Gastrocnemius medialis (tissue), 4 donors: ENCODE measurements at regions of chr12 and their contacts with region 1.

Region 1: DNA sequence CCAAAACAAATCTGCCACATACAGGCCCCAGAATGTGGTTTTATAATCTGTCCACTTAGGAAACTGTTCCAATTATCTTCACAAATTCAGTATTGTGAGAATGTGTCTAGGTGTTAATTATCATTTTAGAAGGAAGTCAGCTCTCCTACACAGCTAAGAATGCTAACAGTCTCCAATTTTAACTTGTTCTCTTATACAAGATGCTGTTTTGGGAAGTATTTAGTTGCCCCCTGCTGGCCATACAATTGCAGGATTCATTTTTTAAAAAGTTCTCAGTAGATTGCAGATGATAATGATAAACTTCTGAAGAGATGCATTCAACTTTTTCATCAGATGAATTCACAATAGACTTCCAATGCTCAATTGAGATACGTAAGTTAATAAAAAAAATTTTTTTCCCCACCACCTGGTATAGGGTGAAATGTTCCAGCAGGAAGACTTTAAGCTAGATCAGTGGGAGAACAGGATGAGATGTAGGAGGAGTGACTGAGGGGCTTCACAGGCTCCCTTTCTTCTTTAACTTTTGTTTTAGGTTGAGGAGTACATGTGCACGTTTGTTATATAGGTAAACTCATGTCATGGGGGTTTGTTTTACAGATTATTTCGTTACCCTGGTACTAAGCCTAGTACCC is 27.3 kb upstream of the OSBPL8 start:
- DNase-seq: peak in 1 of 2 donors; percentile 30
- ATAC-seq: no peak
- H3K4me3 ChIP-seq: no peak overlapping the region
- H3K27ac ChIP-seq: peak overlapping the region; percentile 88 to 97 (median 90)
- H3K4me1 ChIP-seq: peaks cover 15 to 16% of the 10 kb centered on the region in 2 donors
- H3K27me3 ChIP-seq: no peaks in the 10 kb centered on the region
- CTCF ChIP-seq: peak; percentile 55 to 76 (median 64)
- POLR2A ChIP-seq: no peak

Region 2: GRCh38 chr12:76384560-76384959 is 202.3 kb before region 1 on chr12:
- in situ Hi-C with region 1: no loop called
- intact Hi-C with region 1: loop called (anchors 10 kb)
- DNase-seq: peak in 1 of 2 donors; percentile 22
- ATAC-seq: peak in 1 of 2 donors; percentile 53
- H3K4me3 ChIP-seq: no peak overlapping the region
- H3K27ac ChIP-seq: peak overlapping the region in 2 of 4 donors; percentile 45 to 57
- H3K4me1 ChIP-seq: peaks cover 19% of the 10 kb centered on the region in 2 donors
- H3K27me3 ChIP-seq: no peaks in the 10 kb centered on the region
- CTCF ChIP-seq: no peak
- POLR2A ChIP-seq: no peak

Region 3: DNA sequence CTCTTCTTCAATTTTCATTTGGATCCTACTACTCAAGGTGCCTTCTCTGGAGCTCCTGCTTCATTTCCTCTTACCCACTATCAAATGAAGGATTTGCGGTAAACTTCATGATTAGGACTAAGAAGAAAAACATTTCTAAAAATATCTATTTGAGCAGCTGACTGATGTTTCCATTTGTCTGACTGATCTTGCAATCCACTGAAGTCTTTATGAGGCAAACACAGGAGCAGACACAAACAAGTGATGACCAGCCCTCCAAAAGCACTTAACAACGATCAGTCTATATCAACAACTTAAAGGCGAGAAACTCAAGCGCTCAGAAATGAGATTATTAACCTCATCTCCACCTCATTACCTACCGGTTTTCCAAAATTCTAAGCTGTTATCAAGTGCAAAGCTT is 53.5 kb before region 1 on chr12:
- in situ Hi-C with region 1: no loop called
- intact Hi-C with region 1: loop called (anchors 2 kb)
- DNase-seq: no peak
- ATAC-seq: peak; percentile 32 to 68
- H3K4me3 ChIP-seq: peak overlapping the region in 1 of 4 donors; percentile 32
- H3K27ac ChIP-seq: peak overlapping the region; percentile 45 to 67 (median 53)
- H3K4me1 ChIP-seq: peaks cover 21 to 29% of the 10 kb centered on the region in 2 donors
- H3K27me3 ChIP-seq: no peaks in the 10 kb centered on the region
- CTCF ChIP-seq: no peak
- POLR2A ChIP-seq: peak; percentile 13 to 37

Region 4: DNA sequence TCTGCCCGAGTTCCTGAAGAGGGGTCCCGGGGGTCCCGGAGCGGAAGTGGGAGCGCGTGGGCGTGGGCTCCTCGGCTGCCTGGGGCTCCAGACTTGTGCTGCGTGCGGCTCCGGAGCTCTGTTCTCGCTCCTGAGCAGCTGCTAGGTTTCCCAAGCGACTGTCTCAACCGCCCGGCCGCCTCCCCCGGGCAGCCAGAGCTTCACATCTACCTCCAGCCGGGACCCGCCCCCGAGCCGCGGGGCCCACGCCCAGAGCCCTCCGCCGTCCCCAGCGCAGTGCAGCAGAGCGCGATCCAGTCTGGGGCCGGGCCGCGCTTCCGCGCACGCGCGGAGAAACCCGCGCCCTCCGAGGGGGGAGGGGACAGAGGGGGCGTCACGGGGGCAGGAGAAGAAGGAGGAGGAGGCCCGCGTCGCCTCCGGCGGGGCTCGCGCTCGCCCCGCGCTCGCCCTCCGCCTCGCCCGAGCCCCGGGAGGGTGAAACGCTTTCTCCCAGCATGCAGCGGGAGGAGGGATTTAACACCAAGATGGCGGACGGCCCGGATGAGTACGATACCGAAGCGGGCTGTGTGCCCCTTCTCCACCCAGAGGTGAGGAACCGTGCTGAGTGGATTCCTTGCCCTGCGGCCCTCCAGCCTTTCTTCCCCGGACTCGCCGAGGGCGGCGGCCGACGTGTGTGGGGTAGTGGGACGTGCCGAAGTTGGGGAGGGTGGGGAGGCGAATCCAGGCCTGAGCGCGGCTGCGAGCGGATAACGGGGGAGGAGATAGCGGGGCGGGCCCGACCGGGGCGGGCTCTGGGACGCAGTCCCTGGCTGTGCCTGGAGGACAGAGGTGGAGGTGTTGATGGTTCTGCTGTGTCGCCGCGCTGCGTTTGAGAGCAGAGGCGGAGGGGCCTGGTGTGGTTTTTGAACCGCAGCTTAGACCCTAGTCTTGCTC is 177.1 kb after region 1 on chr12 and contains the start of gene ZDHHC17:
- in situ Hi-C with region 1: no loop called
- intact Hi-C with region 1: loop called (anchors 1 kb)
- DNase-seq: peak; percentile 80 to 92
- ATAC-seq: peak; percentile 85 to 87
- H3K4me3 ChIP-seq: peak within 1 kb of the TSS; percentile 75 to 99 (median 86)
- H3K27ac ChIP-seq: peak within 1 kb of the TSS; percentile 92 to 100 (median 98)
- H3K4me1 ChIP-seq: peaks cover 26 to 41% of the 10 kb centered on the region in 2 donors
- H3K27me3 ChIP-seq: no peaks in the 10 kb centered on the region
- CTCF ChIP-seq: peak in 1 of 5 experiments; percentile 14
- POLR2A ChIP-seq: peak; percentile 70 to 79
- total RNA-seq, gene ZDHHC17: 15.5 to 35.6 (median 19.3) TPM

Region 5: GRCh38 chr12:77560714-77561113 is 973.8 kb after region 1 on chr12:
- in situ Hi-C with region 1: no loop called
- intact Hi-C with region 1: no loop called
- DNase-seq: no peak
- ATAC-seq: no peak
- H3K4me3 ChIP-seq: no peak overlapping the region
- H3K27ac ChIP-seq: no peak overlapping the region
- H3K4me1 ChIP-seq: no peaks in the 10 kb centered on the region
- H3K27me3 ChIP-seq: no peaks in the 10 kb centered on the region
- CTCF ChIP-seq: no peak
- POLR2A ChIP-seq: no peak